ENCODE measurements at regions of chr7 and their contacts with region 1.

Region 1: GRCh38 chr7:76020031-76020714 is 25.8 kb upstream of the TMEM120A start:
- DNase-seq: peak; percentile 76
- H3K4me3 ChIP-seq: no peak overlapping the region
- H3K27ac ChIP-seq: no peak overlapping the region
- H3K4me1 ChIP-seq: peaks cover 15% of the 10 kb centered on the region
- H3K27me3 ChIP-seq: no peaks in the 10 kb centered on the region
- CTCF ChIP-seq: peak; percentile 95

Region 2: GRCh38 chr7:75866489-75867389 is 153.4 kb before region 1 on chr7:
- intact Hi-C with region 1: loop called (anchors 2 kb)
- DNase-seq: peak; percentile 45
- H3K4me3 ChIP-seq: no peak overlapping the region
- H3K27ac ChIP-seq: no peak overlapping the region
- H3K4me1 ChIP-seq: peaks cover 5% of the 10 kb centered on the region
- H3K27me3 ChIP-seq: no peaks in the 10 kb centered on the region
- CTCF ChIP-seq: peak; percentile 98

Region 3: GRCh38 chr7:76089923-76090381 is 69.8 kb after region 1 on chr7:
- intact Hi-C with region 1: no loop called
- DNase-seq: no peak
- H3K4me3 ChIP-seq: no peak overlapping the region
- H3K27ac ChIP-seq: no peak overlapping the region
- H3K4me1 ChIP-seq: no peaks in the 10 kb centered on the region
- H3K27me3 ChIP-seq: no peaks in the 10 kb centered on the region
- CTCF ChIP-seq: no peak

Region 4: GRCh38 chr7:76515999-76516443 is 495.8 kb after region 1 on chr7:
- intact Hi-C with region 1: no loop called
- DNase-seq: peak; percentile 65
- H3K4me3 ChIP-seq: peak overlapping the region; percentile 34
- H3K27ac ChIP-seq: no peak overlapping the region
- H3K4me1 ChIP-seq: peaks cover 10% of the 10 kb centered on the region
- H3K27me3 ChIP-seq: no peaks in the 10 kb centered on the region
- CTCF ChIP-seq: peak; percentile 92